Motor neuron (in vitro differentiated cells): ENCODE measurements at regions of chr7 and their contacts with region 1.

Region 1: DNA sequence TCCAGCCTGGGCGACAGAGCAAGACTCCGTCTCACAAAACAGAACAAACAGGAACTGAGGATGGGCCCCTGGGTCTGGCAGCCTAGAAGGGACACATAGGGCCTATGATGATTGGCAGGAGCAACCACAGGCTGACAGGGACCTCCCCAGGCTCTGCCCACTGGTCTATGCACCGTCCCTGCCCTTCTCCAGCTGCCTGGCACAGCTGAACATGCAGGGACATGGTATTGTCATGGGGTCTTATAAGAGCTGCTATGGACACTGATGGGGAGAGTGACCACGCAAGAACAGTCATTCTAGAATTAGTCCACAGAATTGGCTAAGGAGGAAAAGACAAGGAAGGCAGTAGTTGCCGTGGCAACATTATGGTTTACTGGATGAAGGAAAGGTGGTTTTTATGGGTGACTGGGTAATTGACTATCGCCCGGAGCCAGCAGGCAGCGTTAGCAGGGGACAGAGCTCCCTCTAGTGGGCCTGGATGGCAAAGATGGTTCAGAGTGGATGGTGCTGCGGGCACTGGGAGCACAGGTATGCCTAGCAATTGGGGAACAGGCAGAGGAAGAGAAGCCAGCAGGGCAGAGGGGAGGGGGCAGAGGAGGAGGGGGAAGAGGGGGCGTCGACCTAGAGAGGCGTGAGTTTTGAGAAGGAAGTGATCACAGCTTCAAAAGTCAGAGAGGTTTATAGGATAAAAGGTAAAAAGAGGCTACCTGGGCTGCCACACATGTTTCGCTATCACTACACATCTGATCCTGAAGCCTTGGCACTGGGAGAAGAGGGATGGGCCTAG is 7.8 kb upstream of the TRIM56 start:
- ATAC-seq: peak; percentile 93 to 99 (median 98)
- H3K4me3 ChIP-seq: no peak overlapping the region
- H3K27ac ChIP-seq: peak overlapping the region in 1 of 2 donors; percentile 23
- H3K4me1 ChIP-seq: peaks cover 4 to 12% of the 10 kb centered on the region in 2 donors

Region 2: GRCh38 chr7:100889761-100890634 is 187.5 kb before region 1 on chr7:
- in situ Hi-C with region 1: loop called in 2 of 9 experiments (anchors 10 to 25 kb)
- ATAC-seq: peak; percentile 77 to 89 (median 80)
- H3K4me3 ChIP-seq: peak overlapping the region; percentile 45 to 66 (median 55)
- H3K27ac ChIP-seq: peak overlapping the region; percentile 78 to 94
- H3K4me1 ChIP-seq: peaks cover 24 to 27% of the 10 kb centered on the region in 2 donors